CD4-positive, alpha-beta memory T cell (primary cell): ENCODE measurements at regions of chr19 and their contacts with region 1.

Region 1: GRCh38 chr19:3132971-3133792 is 2.7 kb upstream of the GNA15 start:
- DNase-seq: peak; percentile 77 to 94 (median 84)
- H3K4me3 ChIP-seq: peak overlapping the region in 1 of 2 donors; percentile 23
- H3K4me3 Mint-ChIP-seq: peak overlapping the region; percentile 75 to 89 (median 82)
- H3K27ac ChIP-seq: peak overlapping the region; percentile 69
- H3K27ac Mint-ChIP-seq: peak overlapping the region; percentile 91 to 98 (median 97)
- H3K4me1 ChIP-seq: peaks cover 41% of the 10 kb centered on the region
- H3K4me1 Mint-ChIP-seq: peaks cover 19 to 49% (median 31%) of the 10 kb centered on the region in 4 donors
- H3K27me3 ChIP-seq: no peaks in the 10 kb centered on the region
- H3K27me3 Mint-ChIP-seq: no peaks in the 10 kb centered on the region

Region 2: GRCh38 chr19:3146677-3147100 is 13.5 kb after region 1 on chr19:
- CTCF ChIA-PET with region 1: interaction called, 158 read pairs
- POLR2A ChIA-PET with region 1: interaction called, 12 read pairs
- intact Hi-C with region 1: no loop called
- DNase-seq: peak; percentile 45 to 66 (median 49)
- H3K4me3 ChIP-seq: no peak overlapping the region
- H3K4me3 Mint-ChIP-seq: peak overlapping the region in 2 of 8 donors; percentile 20 to 52
- H3K27ac ChIP-seq: no peak overlapping the region
- H3K27ac Mint-ChIP-seq: peak overlapping the region; percentile 62 to 83 (median 73)
- H3K4me1 ChIP-seq: peaks cover 13% of the 10 kb centered on the region
- H3K4me1 Mint-ChIP-seq: peaks cover 10 to 32% (median 18%) of the 10 kb centered on the region in 4 donors
- H3K27me3 ChIP-seq: no peaks in the 10 kb centered on the region
- H3K27me3 Mint-ChIP-seq: no peaks in the 10 kb centered on the region

Region 3: GRCh38 chr19:3176603-3177501 is 43.7 kb after region 1 on chr19:
- CTCF ChIA-PET with region 1: interaction called, 7 read pairs
- POLR2A ChIA-PET with region 1: interaction called, 12 read pairs
- intact Hi-C with region 1: loop called (anchors 5 kb)
- DNase-seq: peak; percentile 56 to 89 (median 64)
- H3K4me3 ChIP-seq: peak overlapping the region; percentile 67 to 68
- H3K4me3 Mint-ChIP-seq: peak overlapping the region; percentile 80 to 90 (median 84)
- H3K27ac ChIP-seq: peak overlapping the region; percentile 80
- H3K27ac Mint-ChIP-seq: peak overlapping the region; percentile 92 to 98 (median 96)
- H3K4me1 ChIP-seq: peaks cover 26% of the 10 kb centered on the region
- H3K4me1 Mint-ChIP-seq: peaks cover 12 to 41% (median 23%) of the 10 kb centered on the region in 4 donors
- H3K27me3 ChIP-seq: no peaks in the 10 kb centered on the region
- H3K27me3 Mint-ChIP-seq: no peaks in the 10 kb centered on the region